CD8-positive, alpha-beta T cell (primary cell): ENCODE measurements at regions of chr2 and their contacts with region 1.

Region 1: GRCh38 chr2:220756653-220757052 is 815.5 kb downstream of the EPHA4 start:
- DNase-seq: no peak
- ATAC-seq: no peak
- H3K4me3 ChIP-seq: no peak overlapping the region
- H3K4me3 Mint-ChIP-seq: no peak overlapping the region
- H3K27ac ChIP-seq: no peak overlapping the region
- H3K27ac Mint-ChIP-seq: no peak overlapping the region
- H3K4me1 ChIP-seq: no peaks in the 10 kb centered on the region
- H3K4me1 Mint-ChIP-seq: no peaks in the 10 kb centered on the region
- H3K27me3 ChIP-seq: no peaks in the 10 kb centered on the region
- H3K27me3 Mint-ChIP-seq: no peaks in the 10 kb centered on the region
- CTCF ChIP-seq: no peak

Region 2: DNA sequence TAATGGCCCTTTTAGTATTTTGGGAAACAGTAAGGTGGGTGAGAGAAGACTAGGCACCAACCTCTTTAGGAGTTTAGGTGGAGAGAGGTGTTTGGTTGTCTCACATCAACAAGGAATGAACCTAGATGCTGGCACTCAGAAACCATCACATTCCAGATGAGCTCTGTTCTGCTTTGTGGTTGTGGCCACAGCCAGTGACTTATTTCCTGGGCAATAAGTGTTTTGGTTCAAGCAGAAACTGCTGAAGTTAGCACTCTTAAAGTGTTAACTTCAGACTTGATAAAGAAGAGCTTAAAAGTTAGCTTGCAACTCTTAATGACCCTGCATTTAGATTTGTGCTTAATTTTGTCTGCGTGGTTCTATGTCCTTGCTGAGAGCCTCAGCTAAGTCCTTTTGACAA is 200.0 kb before region 1 on chr2:
- CTCF ChIA-PET with region 1: no interaction called
- POLR2A ChIA-PET with region 1: no interaction called
- intact Hi-C with region 1: no loop called
- DNase-seq: no peak
- ATAC-seq: no peak
- H3K4me3 ChIP-seq: no peak overlapping the region
- H3K4me3 Mint-ChIP-seq: no peak overlapping the region
- H3K27ac ChIP-seq: no peak overlapping the region
- H3K27ac Mint-ChIP-seq: no peak overlapping the region
- H3K4me1 ChIP-seq: no peaks in the 10 kb centered on the region
- H3K4me1 Mint-ChIP-seq: no peaks in the 10 kb centered on the region
- H3K27me3 ChIP-seq: no peaks in the 10 kb centered on the region
- H3K27me3 Mint-ChIP-seq: no peaks in the 10 kb centered on the region
- CTCF ChIP-seq: no peak

Region 3: GRCh38 chr2:220586980-220587530 is 169.6 kb before region 1 on chr2:
- CTCF ChIA-PET with region 1: no interaction called
- POLR2A ChIA-PET with region 1: no interaction called
- intact Hi-C with region 1: no loop called
- DNase-seq: no peak
- ATAC-seq: no peak
- H3K4me3 ChIP-seq: no peak overlapping the region
- H3K4me3 Mint-ChIP-seq: no peak overlapping the region
- H3K27ac ChIP-seq: no peak overlapping the region
- H3K27ac Mint-ChIP-seq: no peak overlapping the region
- H3K4me1 ChIP-seq: no peaks in the 10 kb centered on the region
- H3K4me1 Mint-ChIP-seq: no peaks in the 10 kb centered on the region
- H3K27me3 ChIP-seq: no peaks in the 10 kb centered on the region
- H3K27me3 Mint-ChIP-seq: no peaks in the 10 kb centered on the region
- CTCF ChIP-seq: no peak

Region 4: GRCh38 chr2:220775856-220776488 is 19.3 kb after region 1 on chr2:
- CTCF ChIA-PET with region 1: no interaction called
- POLR2A ChIA-PET with region 1: no interaction called
- intact Hi-C with region 1: no loop called
- DNase-seq: no peak
- ATAC-seq: no peak
- H3K4me3 ChIP-seq: no peak overlapping the region
- H3K4me3 Mint-ChIP-seq: no peak overlapping the region
- H3K27ac ChIP-seq: no peak overlapping the region
- H3K27ac Mint-ChIP-seq: no peak overlapping the region
- H3K4me1 ChIP-seq: no peaks in the 10 kb centered on the region
- H3K4me1 Mint-ChIP-seq: no peaks in the 10 kb centered on the region
- H3K27me3 ChIP-seq: no peaks in the 10 kb centered on the region
- H3K27me3 Mint-ChIP-seq: no peaks in the 10 kb centered on the region
- CTCF ChIP-seq: no peak

Region 5: GRCh38 chr2:221104361-221104811 is 347.7 kb after region 1 on chr2:
- CTCF ChIA-PET with region 1: no interaction called
- POLR2A ChIA-PET with region 1: no interaction called
- intact Hi-C with region 1: no loop called
- DNase-seq: no peak
- ATAC-seq: no peak
- H3K4me3 ChIP-seq: no peak overlapping the region
- H3K4me3 Mint-ChIP-seq: no peak overlapping the region
- H3K27ac ChIP-seq: no peak overlapping the region
- H3K27ac Mint-ChIP-seq: no peak overlapping the region
- H3K4me1 ChIP-seq: no peaks in the 10 kb centered on the region
- H3K4me1 Mint-ChIP-seq: no peaks in the 10 kb centered on the region
- H3K27me3 ChIP-seq: no peaks in the 10 kb centered on the region
- H3K27me3 Mint-ChIP-seq: peaks cover 2% of the 10 kb centered on the region
- CTCF ChIP-seq: no peak

Region 6: DNA sequence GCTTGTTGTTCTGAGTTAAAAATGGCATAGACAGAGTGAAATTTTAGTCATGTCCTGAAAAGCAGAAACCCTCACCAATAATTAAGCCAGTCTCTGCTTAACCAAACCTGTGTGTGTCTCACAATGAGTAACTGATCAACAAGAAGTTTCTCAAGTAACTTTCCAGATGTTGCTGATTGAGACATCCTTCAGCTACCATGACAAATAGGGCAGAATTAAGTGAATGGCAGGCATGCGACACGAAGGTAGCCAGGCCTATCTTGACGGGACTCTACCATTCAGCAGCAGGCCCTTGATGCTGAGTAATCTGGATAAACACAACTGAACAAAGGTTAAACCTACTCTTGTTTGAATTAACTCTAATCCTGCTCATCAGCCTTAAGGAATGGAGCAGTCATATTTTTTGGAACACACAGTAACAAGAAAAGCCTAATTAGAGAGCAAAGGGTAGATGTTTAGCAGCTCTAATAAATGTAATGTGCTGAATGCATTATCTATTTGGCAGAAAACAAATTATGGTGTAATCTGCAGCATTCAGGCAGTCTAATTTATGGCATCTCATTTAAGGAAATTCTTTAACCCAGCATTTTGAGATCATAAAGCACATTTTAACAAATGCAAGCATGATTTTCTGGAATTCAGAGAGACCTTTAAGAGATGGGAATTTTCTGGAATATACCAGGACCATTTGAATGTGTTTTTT is 974.9 kb after region 1 on chr2:
- CTCF ChIA-PET with region 1: no interaction called
- POLR2A ChIA-PET with region 1: no interaction called
- intact Hi-C with region 1: loop called in 1 of 2 experiments (anchors 5 kb)
- DNase-seq: no peak
- ATAC-seq: no peak
- H3K4me3 ChIP-seq: no peak overlapping the region
- H3K4me3 Mint-ChIP-seq: no peak overlapping the region
- H3K27ac ChIP-seq: no peak overlapping the region
- H3K27ac Mint-ChIP-seq: no peak overlapping the region
- H3K4me1 ChIP-seq: no peaks in the 10 kb centered on the region
- H3K4me1 Mint-ChIP-seq: no peaks in the 10 kb centered on the region
- H3K27me3 ChIP-seq: no peaks in the 10 kb centered on the region
- H3K27me3 Mint-ChIP-seq: no peaks in the 10 kb centered on the region
- CTCF ChIP-seq: no peak